Ascending aorta (tissue), 2 donors: ENCODE measurements at regions of chr3 and their contacts with region 1.

Region 1: GRCh38 chr3:171654809-171655208 is 155.5 kb downstream of the PLD1 start:
- DNase-seq: peak in 1 of 2 donors; percentile 82
- H3K4me3 ChIP-seq: no peak overlapping the region
- H3K27ac ChIP-seq: peak overlapping the region; percentile 60 to 67
- H3K4me1 ChIP-seq: peaks cover 0 to 13% of the 10 kb centered on the region in 2 donors
- H3K27me3 ChIP-seq: no peaks in the 10 kb centered on the region
- CTCF ChIP-seq: no peak

Region 2: DNA sequence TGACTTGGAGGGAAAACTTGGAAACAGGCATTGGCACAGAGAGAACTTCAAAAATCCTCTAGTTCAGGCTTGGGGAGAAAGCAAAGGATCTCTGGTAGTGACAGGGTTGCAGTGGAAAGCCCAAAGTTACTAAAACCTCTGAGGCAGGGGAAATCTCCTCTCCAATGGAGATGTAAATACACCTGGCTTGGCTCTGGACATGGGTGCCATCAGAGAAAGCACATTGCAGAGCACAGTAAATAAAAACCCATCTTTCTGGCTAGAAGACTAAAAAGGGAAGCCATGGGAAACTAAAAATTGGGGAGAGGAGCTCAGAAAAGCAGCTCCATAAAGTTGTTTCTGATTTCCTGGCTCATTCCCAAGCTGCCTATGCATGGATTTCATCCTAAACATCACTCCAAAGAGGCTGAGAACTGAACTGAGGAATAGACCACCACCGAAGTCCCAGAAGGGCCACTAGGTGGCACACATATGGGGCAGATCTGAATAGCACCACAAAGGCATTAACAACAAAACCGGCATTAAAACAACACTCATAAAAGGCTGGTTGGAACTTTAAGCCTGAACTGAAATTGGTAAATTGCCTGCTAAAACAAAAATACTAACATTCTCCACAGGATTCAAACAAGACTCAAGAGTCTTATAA is 49.1 kb after region 1 on chr3:
- intact Hi-C with region 1: loop called (anchors 5 kb)
- DNase-seq: no peak
- H3K4me3 ChIP-seq: no peak overlapping the region
- H3K27ac ChIP-seq: no peak overlapping the region
- H3K4me1 ChIP-seq: peaks cover 0 to 5% of the 10 kb centered on the region in 2 donors
- H3K27me3 ChIP-seq: no peaks in the 10 kb centered on the region
- CTCF ChIP-seq: peak in 1 of 3 experiments; percentile 42

Region 3: GRCh38 chr3:172341482-172342059 is 686.8 kb after region 1 on chr3:
- intact Hi-C with region 1: loop called (anchors 5 kb)
- DNase-seq: no peak
- H3K4me3 ChIP-seq: no peak overlapping the region
- H3K27ac ChIP-seq: no peak overlapping the region
- H3K4me1 ChIP-seq: no peaks in the 10 kb centered on the region
- H3K27me3 ChIP-seq: no peaks in the 10 kb centered on the region
- CTCF ChIP-seq: peak; percentile 62 to 77 (median 68)